ENCODE measurements at regions of chr12 and their contacts with region 1.

Region 1: GRCh38 chr12:15741082-15741481 is 48.1 kb downstream of the EPS8 start:
- DNase-seq: no peak
- H3K4me3 ChIP-seq: no peak overlapping the region
- H3K27ac ChIP-seq: no peak overlapping the region
- H3K4me1 ChIP-seq: no peaks in the 10 kb centered on the region
- H3K27me3 ChIP-seq: no peaks in the 10 kb centered on the region
- CTCF ChIP-seq: no peak

Region 2: GRCh38 chr12:15882118-15882971 is 141.3 kb after region 1 on chr12 and contains the start of gene STRAP:
- CTCF ChIA-PET with region 1: no interaction called
- POLR2A ChIA-PET with region 1: interaction called, 12 read pairs
- intact Hi-C with region 1: no loop called
- DNase-seq: peak; percentile 94 to 98
- H3K4me3 ChIP-seq: peak within 1 kb of the TSS; percentile 88
- H3K27ac ChIP-seq: peak within 1 kb of the TSS; percentile 95
- H3K4me1 ChIP-seq: peaks cover 35% of the 10 kb centered on the region
- H3K27me3 ChIP-seq: no peaks in the 10 kb centered on the region
- CTCF ChIP-seq: no peak
- total RNA-seq, gene STRAP: 164 and 205 TPM in 2 replicates

Measured in PC-9 (cell line).